K562 (cell line): ENCODE measurements at regions of chr12 and their contacts with region 1.

Region 1: GRCh38 chr12:124321040-124321481 is 26.2 kb downstream of the RFLNA start:
- DNase-seq: peak; percentile 61 to 77 (median 74)
- ATAC-seq: peak; percentile 94
- H3K4me3 ChIP-seq: no peak overlapping the region
- H3K27ac ChIP-seq: no peak overlapping the region
- H3K4me1 ChIP-seq: no peaks in the 10 kb centered on the region
- H3K27me3 ChIP-seq: peaks cover 23 to 35% of the 10 kb centered on the region in 2 experiments; a peak in 3 of 5 replicates
- CTCF ChIP-seq: peak; percentile 83 to 93 (median 86)
- EP300 ChIP-seq: no peak
- POLR2A ChIP-seq: no peak
- RAD21 ChIP-seq: peak; percentile 92 to 95

Region 2: DNA sequence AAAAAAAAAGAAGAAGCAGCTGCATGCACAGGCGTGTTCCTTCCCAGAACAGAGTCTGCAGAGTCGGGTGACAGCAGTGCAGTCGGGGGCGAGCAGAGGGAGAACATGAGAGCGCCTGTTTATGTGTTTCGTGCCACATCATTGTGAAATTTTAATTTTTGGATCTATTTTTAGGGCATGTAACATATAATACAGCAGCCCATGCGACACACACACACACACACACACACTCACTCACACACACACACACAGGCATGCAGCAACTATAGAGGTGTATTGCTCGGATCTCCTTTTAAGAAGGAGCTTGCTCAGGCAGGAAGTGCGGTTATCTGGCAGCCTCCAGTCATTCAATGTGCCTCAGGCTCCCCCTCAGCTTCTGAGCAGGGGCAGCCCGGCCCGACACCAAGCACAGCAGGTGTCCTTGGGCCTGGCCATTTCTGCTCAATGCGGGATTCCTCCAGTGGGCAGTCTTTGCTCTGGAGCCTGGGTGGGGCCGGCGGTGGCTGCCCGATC is 276.2 kb before region 1 on chr12:
- CTCF ChIA-PET with region 1: no interaction called
- POLR2A ChIA-PET with region 1: no interaction called
- in situ Hi-C with region 1: loop called (anchors 5 kb)
- intact Hi-C with region 1: no loop called
- DNase-seq: no peak
- ATAC-seq: no peak
- H3K4me3 ChIP-seq: no peak overlapping the region
- H3K27ac ChIP-seq: no peak overlapping the region
- H3K4me1 ChIP-seq: no peaks in the 10 kb centered on the region
- H3K27me3 ChIP-seq: peaks cover 28 to 44% of the 10 kb centered on the region in 2 experiments
- CTCF ChIP-seq: no peak
- EP300 ChIP-seq: no peak
- POLR2A ChIP-seq: no peak
- RAD21 ChIP-seq: no peak

Region 3: GRCh38 chr12:124453419-124454351 is 132.6 kb after region 1 on chr12:
- CTCF ChIA-PET with region 1: no interaction called
- POLR2A ChIA-PET with region 1: no interaction called
- in situ Hi-C with region 1: no loop called
- intact Hi-C with region 1: no loop called
- DNase-seq: no peak
- ATAC-seq: no peak
- H3K4me3 ChIP-seq: no peak overlapping the region
- H3K27ac ChIP-seq: no peak overlapping the region
- H3K4me1 ChIP-seq: peaks cover 0 to 38% of the 10 kb centered on the region in 2 experiments; a peak in 2 of 5 replicates
- H3K27me3 ChIP-seq: no peaks in the 10 kb centered on the region
- CTCF ChIP-seq: no peak
- EP300 ChIP-seq: no peak
- POLR2A ChIP-seq: no peak
- RAD21 ChIP-seq: no peak

Region 4: GRCh38 chr12:124680863-124681778 is 360.1 kb after region 1 on chr12:
- CTCF ChIA-PET with region 1: no interaction called
- POLR2A ChIA-PET with region 1: no interaction called
- in situ Hi-C with region 1: no loop called
- intact Hi-C with region 1: loop called (anchors 10 kb)
- DNase-seq: peak; percentile 63 to 79 (median 70)
- ATAC-seq: peak; percentile 94
- H3K4me3 ChIP-seq: no peak overlapping the region
- H3K27ac ChIP-seq: no peak overlapping the region
- H3K4me1 ChIP-seq: peaks cover 20 to 48% of the 10 kb centered on the region in 2 experiments
- H3K27me3 ChIP-seq: peaks cover 0 to 19% of the 10 kb centered on the region in 2 experiments; a peak in 1 of 5 replicates
- CTCF ChIP-seq: peak; percentile 69 to 78 (median 71)
- EP300 ChIP-seq: 0 out of 2 replicates have a peak, but pooled peaks have one; percentile 11
- POLR2A ChIP-seq: no peak
- RAD21 ChIP-seq: peak; percentile 83 to 88